Psoas muscle (tissue), 8 donors: ENCODE measurements at regions of chr18 and their contacts with region 1.

Region 1: GRCh38 chr18:35290073-35290735 is at the start of gene ZSCAN30:
- DNase-seq: peak; percentile 95 to 97
- ATAC-seq: peak; percentile 99 to 100 (median 100)
- H3K4me3 ChIP-seq: peak within 1 kb of the TSS; percentile 87
- H3K27ac ChIP-seq: peak within 1 kb of the TSS; percentile 80
- H3K4me1 ChIP-seq: peaks cover 12% of the 10 kb centered on the region
- H3K27me3 ChIP-seq: no peaks in the 10 kb centered on the region
- CTCF ChIP-seq: no peak
- total RNA-seq, gene ZSCAN30: 8.8 to 12.2 (median 10.4) TPM

Region 2: GRCh38 chr18:34942975-34943374 is 347.2 kb before region 1 on chr18:
- intact Hi-C with region 1: no loop called
- DNase-seq: no peak
- ATAC-seq: peak; percentile 69 to 80 (median 75)
- H3K4me3 ChIP-seq: peak overlapping the region; percentile 62
- H3K27ac ChIP-seq: peak overlapping the region; percentile 88
- H3K4me1 ChIP-seq: peaks cover 22% of the 10 kb centered on the region
- H3K27me3 ChIP-seq: no peaks in the 10 kb centered on the region
- CTCF ChIP-seq: peak; percentile 42

Region 3: DNA sequence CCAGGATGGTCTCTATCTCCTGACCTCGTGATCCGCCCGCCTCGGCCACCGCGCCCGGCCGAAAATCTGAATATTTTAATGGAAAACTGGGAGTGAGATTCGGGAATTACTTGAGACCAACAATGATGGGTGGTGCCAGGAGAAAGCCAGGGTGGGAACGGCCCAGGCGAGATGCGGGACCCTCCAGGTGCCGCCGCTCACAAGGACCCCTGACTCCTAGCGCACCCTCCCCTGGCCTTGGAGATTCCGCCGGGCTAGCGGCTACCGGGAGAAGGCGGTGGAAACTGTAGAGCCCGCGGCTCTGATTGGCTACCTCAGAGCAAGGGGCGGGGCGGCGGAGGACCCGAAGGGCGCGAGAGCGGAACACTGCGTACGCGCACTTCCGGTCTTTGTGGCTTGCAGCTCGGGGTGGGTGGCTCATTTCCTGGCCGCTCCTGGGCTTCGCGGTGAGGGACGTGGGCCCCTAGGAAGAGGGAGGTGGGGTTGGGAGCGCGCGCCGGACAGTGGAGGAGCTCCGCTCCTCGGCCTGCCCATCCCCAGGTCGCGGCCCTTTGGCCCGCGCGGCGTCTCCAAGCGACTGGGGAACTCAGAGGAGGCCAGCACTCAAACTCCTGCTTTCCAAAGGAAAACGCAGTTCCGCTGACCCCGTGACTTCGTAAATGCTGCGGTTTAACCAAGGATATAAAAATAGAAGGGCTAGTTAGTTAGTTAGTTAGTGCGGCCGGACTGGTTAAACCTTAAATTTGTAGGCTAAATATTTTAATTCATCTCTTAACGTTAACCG is 49.3 kb before region 1 on chr18 and contains the start of gene ZNF397:
- intact Hi-C with region 1: loop called (anchors 5 kb)
- DNase-seq: peak; percentile 99
- ATAC-seq: peak; percentile 100
- H3K4me3 ChIP-seq: peak within 1 kb of the TSS; percentile 90
- H3K27ac ChIP-seq: peak within 1 kb of the TSS; percentile 99
- H3K4me1 ChIP-seq: peaks cover 12% of the 10 kb centered on the region
- H3K27me3 ChIP-seq: no peaks in the 10 kb centered on the region
- CTCF ChIP-seq: no peak
- total RNA-seq, gene ZNF397: 13.7 to 25.0 (median 18.7) TPM

Region 4: DNA sequence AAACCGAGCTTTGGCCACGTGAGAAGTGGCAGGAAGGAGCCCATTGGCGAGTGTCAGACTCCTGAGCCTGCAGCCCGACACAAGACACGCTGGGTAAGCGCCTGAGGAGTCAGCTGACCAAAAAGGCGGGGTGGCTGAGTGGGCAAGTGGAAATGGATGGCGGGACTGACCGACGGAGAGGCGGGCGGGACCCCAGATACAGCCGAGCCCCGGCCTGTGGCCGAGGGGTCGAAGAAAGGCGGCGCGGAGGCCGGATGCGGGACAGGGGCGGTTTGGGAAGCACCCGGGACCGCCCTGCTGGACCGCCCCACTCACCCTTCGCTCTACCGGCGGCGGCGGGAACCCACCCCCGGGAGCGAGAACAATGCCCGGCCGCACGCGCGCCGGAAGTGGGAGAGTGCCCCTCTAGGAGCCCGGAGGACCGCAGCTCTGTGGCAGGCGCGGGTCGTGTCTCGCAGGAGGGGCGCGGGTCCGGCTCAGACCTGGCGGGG is 23.0 kb before region 1 on chr18:
- intact Hi-C with region 1: loop called in 1 of 2 experiments (anchors 1 kb)
- DNase-seq: peak; percentile 85 to 89
- ATAC-seq: peak; percentile 88 to 95 (median 95)
- H3K4me3 ChIP-seq: peak overlapping the region; percentile 73
- H3K27ac ChIP-seq: peak overlapping the region; percentile 78
- H3K4me1 ChIP-seq: no peaks in the 10 kb centered on the region
- H3K27me3 ChIP-seq: no peaks in the 10 kb centered on the region
- CTCF ChIP-seq: no peak